Calu3 (cell line): ENCODE measurements at regions of chr22 and their contacts with region 1.

Region 1: DNA sequence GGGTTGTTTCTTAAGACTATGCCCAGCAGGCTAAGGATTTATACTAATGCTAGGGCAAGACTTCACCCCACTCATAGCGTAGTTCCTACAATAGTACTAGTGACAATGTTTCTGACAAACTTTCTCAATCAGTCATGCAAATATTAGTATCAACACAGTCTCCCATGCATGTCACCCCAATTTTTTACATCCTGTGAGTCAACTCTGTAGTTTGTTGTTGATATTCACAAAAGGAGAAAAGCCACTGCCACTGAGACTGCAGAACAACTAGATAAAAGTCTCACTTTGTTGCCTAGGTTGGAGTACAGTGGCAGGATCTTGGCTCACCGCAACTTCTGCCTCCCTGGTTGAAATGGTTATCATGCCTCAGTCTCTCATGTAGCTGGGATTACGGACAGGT is 155.2 kb downstream of the RBFOX2 start:
- DNase-seq: no peak
- H3K4me3 Mint-ChIP-seq: no peak overlapping the region
- H3K27ac Mint-ChIP-seq: no peak overlapping the region
- H3K4me1 Mint-ChIP-seq: peaks cover 15% of the 10 kb centered on the region
- H3K27me3 Mint-ChIP-seq: no peaks in the 10 kb centered on the region
- CTCF ChIP-seq: no peak

Region 2: GRCh38 chr22:35664955-35665599 is 208.3 kb before region 1 on chr22:
- CTCF ChIA-PET with region 1: no interaction called
- intact Hi-C with region 1: no loop called
- DNase-seq: no peak
- H3K4me3 Mint-ChIP-seq: no peak overlapping the region
- H3K27ac Mint-ChIP-seq: no peak overlapping the region
- H3K4me1 Mint-ChIP-seq: no peaks in the 10 kb centered on the region
- H3K27me3 Mint-ChIP-seq: no peaks in the 10 kb centered on the region
- CTCF ChIP-seq: no peak

Region 3: DNA sequence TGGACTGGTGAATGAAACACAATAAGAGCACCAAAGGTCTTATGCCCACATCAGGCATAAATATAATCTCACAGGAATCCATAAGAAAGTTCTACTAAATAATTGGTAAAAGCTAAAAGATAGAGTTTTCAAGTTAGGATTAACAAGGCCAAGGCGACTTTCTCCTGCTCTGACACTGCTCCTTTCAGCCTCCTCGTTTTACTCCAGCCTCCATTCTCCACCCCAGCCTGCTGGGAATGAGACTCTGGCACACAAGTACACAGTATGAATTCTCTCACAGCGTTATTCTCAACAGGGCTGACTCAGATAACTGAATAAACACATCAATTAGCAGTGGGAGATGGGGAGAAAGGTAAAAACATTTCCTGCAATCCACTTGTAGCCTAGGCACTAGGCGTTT is 60.8 kb before region 1 on chr22:
- CTCF ChIA-PET with region 1: interaction called, 12 read pairs
- intact Hi-C with region 1: no loop called
- DNase-seq: no peak
- H3K4me3 Mint-ChIP-seq: no peak overlapping the region
- H3K27ac Mint-ChIP-seq: no peak overlapping the region
- H3K4me1 Mint-ChIP-seq: no peaks in the 10 kb centered on the region
- H3K27me3 Mint-ChIP-seq: no peaks in the 10 kb centered on the region
- CTCF ChIP-seq: no peak

Region 4: GRCh38 chr22:36036167-36036624 is 162.8 kb after region 1 on chr22:
- CTCF ChIA-PET with region 1: no interaction called
- intact Hi-C with region 1: no loop called
- DNase-seq: no peak
- H3K4me3 Mint-ChIP-seq: no peak overlapping the region
- H3K27ac Mint-ChIP-seq: no peak overlapping the region
- H3K4me1 Mint-ChIP-seq: no peaks in the 10 kb centered on the region
- H3K27me3 Mint-ChIP-seq: peaks cover 10% of the 10 kb centered on the region
- CTCF ChIP-seq: no peak